Right ventricle myocardium superior (tissue), 1 donor: ENCODE measurements at regions of chr1 and their contacts with region 1.

Region 1: GRCh38 chr1:22773981-22774832 is 63.6 kb downstream of the EPHB2 start:
- DNase-seq: peak; percentile 83
- ATAC-seq: peak; percentile 72

Region 2: GRCh38 chr1:22728751-22729399 is 45.3 kb before region 1 on chr1:
- intact Hi-C with region 1: loop called (anchors 10 kb)
- DNase-seq: no peak
- ATAC-seq: no peak